Common myeloid progenitor, CD34-positive (primary cell): ENCODE measurements at regions of chr5 and their contacts with region 1.

Region 1: DNA sequence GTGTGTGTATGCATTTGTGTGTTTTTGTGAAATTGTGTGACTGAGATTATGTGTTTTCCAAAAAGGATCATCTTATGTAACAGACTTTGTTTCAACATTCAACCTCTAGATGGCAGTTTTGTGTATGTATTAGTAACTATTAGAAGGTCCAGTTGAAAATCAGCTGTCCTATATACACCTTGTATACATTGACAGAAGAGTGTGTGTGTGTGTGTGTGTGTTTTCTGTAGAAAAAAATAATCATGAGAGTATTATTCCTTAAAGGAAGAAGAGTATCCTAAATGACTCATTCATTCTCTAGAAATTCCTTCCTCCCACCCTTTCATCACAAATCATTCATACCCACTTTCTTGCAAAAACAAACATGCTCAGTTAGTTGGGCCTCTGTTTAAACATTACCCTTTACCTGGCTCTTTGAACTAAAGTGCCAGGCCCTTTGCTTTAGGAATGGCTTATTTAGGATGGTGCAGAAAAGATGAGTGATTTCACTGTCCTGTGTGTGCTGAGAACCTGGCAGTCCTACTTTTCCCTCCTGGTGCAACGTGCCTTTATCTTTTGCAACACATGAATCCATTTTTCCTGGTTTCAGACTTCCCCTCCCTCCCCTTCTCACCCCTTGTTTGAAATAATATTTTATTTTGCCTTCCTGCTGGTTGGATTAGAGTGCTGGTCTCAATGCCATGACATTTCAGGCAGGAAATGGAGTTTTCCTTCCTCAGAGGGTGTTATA is 152.2 kb downstream of the ARHGAP26 start:
- DNase-seq: peak; percentile 42 to 68 (median 61)
- H3K4me3 ChIP-seq: no peak overlapping the region
- H3K27ac ChIP-seq: no peak overlapping the region
- H3K4me1 ChIP-seq: peaks cover 4 to 29% (median 17%) of the 10 kb centered on the region in 4 experiments
- H3K27me3 ChIP-seq: no peaks in the 10 kb centered on the region

Region 2: DNA sequence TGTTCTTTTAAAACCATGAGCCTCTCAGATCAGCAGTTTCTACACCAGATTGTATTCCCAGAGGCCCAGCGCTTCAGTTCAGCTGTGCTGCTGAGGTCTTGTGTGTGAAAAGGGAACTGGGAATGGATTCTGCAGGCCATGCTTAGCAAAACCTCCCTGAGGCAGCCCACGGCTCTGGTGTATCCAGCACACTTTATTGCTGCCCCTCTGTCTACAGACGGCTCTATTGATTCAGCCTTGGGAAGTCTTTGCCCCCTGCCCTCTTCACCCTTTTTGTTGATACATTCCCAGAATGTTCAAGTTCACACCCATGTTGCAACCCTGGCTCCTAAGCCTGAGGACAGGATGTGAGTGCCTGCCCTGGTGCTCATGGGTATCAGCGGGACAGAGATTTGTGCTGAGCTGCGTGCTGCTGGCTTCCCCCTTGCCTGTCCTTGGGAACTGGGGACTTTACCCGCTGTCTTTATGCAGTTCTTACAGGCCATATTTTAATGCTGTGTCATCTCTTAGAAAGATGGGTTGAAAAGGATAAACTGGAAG is 114.9 kb before region 1 on chr5:
- CTCF ChIA-PET with region 1: no interaction called
- POLR2A ChIA-PET with region 1: no interaction called
- DNase-seq: no peak
- H3K4me3 ChIP-seq: no peak overlapping the region
- H3K27ac ChIP-seq: no peak overlapping the region
- H3K4me1 ChIP-seq: peaks cover 8 to 25% (median 10%) of the 10 kb centered on the region in 4 experiments
- H3K27me3 ChIP-seq: no peaks in the 10 kb centered on the region

Region 3: GRCh38 chr5:142959683-142960657 is 37.6 kb after region 1 on chr5:
- CTCF ChIA-PET with region 1: interaction called, 15 read pairs
- POLR2A ChIA-PET with region 1: interaction called, 3 read pairs
- DNase-seq: no peak
- H3K4me3 ChIP-seq: no peak overlapping the region
- H3K27ac ChIP-seq: no peak overlapping the region
- H3K4me1 ChIP-seq: peaks cover 0 to 9% (median 2%) of the 10 kb centered on the region in 4 experiments
- H3K27me3 ChIP-seq: no peaks in the 10 kb centered on the region

Region 4: GRCh38 chr5:142966121-142966420 is 43.7 kb after region 1 on chr5:
- CTCF ChIA-PET with region 1: interaction called, 15 read pairs
- POLR2A ChIA-PET with region 1: interaction called, 3 read pairs
- DNase-seq: no peak
- H3K4me3 ChIP-seq: no peak overlapping the region
- H3K27ac ChIP-seq: no peak overlapping the region
- H3K4me1 ChIP-seq: no peaks in the 10 kb centered on the region
- H3K27me3 ChIP-seq: no peaks in the 10 kb centered on the region

Region 5: DNA sequence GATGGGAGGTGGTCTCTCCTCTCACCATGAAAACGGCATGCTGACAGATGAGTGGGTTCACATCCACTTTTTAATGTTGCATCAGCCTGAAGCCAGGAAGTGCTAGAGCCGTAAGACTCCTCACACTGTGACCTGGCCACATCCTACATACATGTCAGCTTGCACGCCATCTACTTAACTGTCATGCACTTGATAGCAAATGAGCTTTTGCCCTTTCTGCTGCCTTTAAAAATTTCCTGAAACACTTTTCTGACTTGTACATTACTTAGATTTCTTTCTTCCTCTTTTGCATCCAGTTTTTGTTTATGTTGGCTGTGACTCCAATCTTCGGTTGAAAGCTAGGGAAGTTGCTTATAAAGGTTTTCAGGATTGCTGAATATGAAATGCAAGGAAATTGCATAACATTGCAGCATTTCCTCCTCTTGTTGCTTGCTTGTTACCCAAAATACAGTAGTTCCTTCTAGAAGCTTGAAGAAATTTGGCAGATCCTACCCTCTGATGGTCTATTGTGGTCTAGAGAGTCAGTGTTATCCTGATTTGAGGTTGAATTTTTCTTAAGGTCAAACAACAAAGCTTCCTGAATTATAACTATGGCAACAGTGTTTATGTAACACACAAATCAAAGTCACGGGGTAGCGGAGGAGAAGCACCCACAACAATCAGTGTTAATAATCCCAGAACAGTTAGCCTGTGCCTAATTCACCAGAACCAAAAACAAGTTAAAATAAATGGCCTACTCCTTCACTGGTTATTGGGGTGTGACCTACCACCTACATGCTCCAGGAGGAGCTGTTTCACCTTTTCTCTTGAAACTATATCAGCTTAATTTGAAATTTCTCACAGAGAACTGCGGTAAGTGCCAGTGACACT is 80.3 kb after region 1 on chr5:
- CTCF ChIA-PET with region 1: interaction called, 15 read pairs
- POLR2A ChIA-PET with region 1: no interaction called
- DNase-seq: peak; percentile 92 to 98 (median 97)
- H3K4me3 ChIP-seq: peak overlapping the region in 3 of 7 experiments; percentile 3 to 45 (median 33)
- H3K27ac ChIP-seq: peak overlapping the region; percentile 85 to 94
- H3K4me1 ChIP-seq: peaks cover 17 to 45% (median 28%) of the 10 kb centered on the region in 4 experiments
- H3K27me3 ChIP-seq: no peaks in the 10 kb centered on the region

Region 6: GRCh38 chr5:143051244-143052058 is 129.1 kb after region 1 on chr5:
- CTCF ChIA-PET with region 1: no interaction called
- POLR2A ChIA-PET with region 1: no interaction called
- DNase-seq: peak in 2 of 3 donors; percentile 60
- H3K4me3 ChIP-seq: peak overlapping the region in 1 of 7 experiments; percentile 36
- H3K27ac ChIP-seq: no peak overlapping the region
- H3K4me1 ChIP-seq: peaks cover 0 to 40% (median 16%) of the 10 kb centered on the region in 4 experiments
- H3K27me3 ChIP-seq: no peaks in the 10 kb centered on the region